PC-3 (cell line): ENCODE measurements at regions of chr9 and their contacts with region 1.

Region 1: DNA sequence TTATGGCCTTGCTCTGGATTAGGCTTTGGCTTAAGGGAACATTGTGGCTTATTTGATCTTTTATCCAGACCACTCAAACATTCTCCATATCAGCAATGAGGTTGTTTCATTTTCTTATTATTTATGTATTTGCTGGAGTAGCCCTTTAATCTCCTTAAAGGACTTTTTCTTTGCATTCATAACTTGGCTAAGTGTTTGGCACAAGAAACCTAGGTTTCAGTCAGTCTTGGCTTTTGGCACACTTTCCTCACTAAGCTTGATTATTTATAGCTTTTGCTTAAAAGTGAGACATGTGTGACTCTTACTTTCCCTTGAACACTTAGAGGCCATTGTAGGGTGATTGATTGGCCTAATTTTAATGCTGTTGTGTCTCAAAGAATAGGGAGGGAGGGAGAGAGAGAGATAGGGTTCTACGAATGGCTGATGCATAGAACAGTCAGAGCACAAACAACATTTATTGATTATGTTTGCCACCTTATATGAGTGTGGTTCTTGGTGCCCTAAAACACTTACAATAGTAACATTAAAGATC is 2265.3 kb upstream of the C9orf72 start:
- DNase-seq: no peak
- ATAC-seq: no peak
- H3K4me3 ChIP-seq: no peak overlapping the region
- H3K27ac ChIP-seq: no peak overlapping the region
- H3K4me1 ChIP-seq: no peaks in the 10 kb centered on the region
- H3K27me3 ChIP-seq: no peaks in the 10 kb centered on the region
- CTCF ChIP-seq: no peak

Region 2: GRCh38 chr9:29390859-29391258 is 447.7 kb before region 1 on chr9:
- CTCF ChIA-PET with region 1: no interaction called
- POLR2A ChIA-PET with region 1: interaction called, 13 read pairs
- intact Hi-C with region 1: no loop called
- DNase-seq: no peak
- ATAC-seq: no peak
- H3K4me3 ChIP-seq: no peak overlapping the region
- H3K27ac ChIP-seq: no peak overlapping the region
- H3K4me1 ChIP-seq: 0 out of 2 replicates have a peak, but pooled peaks cover 4% of the 10 kb centered on the region
- H3K27me3 ChIP-seq: no peaks in the 10 kb centered on the region
- CTCF ChIP-seq: no peak

Region 3: DNA sequence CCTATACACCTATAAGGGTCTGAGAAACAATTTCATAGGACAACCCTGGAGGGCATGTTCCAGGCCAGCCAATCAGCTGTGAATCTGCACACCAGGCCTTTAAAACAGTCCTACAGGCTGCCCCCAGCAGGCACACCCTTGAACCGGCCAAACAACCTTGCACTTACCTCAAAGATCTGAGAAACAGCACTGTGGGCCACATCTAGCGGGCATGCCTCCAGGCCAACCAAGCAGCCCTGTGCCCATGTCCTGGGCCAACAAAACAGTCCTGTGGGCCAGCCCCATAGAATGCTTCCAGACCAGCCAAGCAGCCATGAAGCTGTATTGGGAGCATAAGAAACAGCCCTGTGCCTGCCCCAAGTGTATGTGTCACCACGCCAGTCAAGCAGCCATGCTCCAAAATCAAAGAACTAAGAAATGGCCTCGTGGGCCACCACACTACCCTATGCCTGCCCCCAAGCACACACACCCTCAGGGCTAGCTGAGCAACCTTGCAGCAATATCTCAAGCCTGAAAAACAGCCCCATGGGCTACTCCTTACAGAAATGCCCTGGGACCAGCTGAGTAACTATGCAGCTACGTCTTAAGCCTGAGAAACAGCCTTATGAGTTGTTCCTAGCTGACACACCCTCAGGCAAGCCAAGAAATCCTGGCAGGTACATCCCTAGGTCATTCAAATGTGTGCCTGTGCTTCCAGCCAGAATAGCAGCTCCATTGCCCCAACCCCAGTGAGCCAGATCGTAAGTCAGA is 21.4 kb before region 1 on chr9:
- CTCF ChIA-PET with region 1: no interaction called
- POLR2A ChIA-PET with region 1: no interaction called
- intact Hi-C with region 1: no loop called
- DNase-seq: no peak
- ATAC-seq: no peak
- H3K4me3 ChIP-seq: no peak overlapping the region
- H3K27ac ChIP-seq: no peak overlapping the region
- H3K4me1 ChIP-seq: no peaks in the 10 kb centered on the region
- H3K27me3 ChIP-seq: no peaks in the 10 kb centered on the region
- CTCF ChIP-seq: no peak